ENCODE measurements at regions of chr5 and their contacts with region 1.

Region 1: GRCh38 chr5:131382407-131383395 is 118.8 kb downstream of the CDC42SE2 start:
- DNase-seq: peak; percentile 61
- H3K4me3 Mint-ChIP-seq: peak overlapping the region; percentile 57
- H3K27ac Mint-ChIP-seq: peak overlapping the region; percentile 96
- H3K4me1 Mint-ChIP-seq: peaks cover 93% of the 10 kb centered on the region
- H3K27me3 Mint-ChIP-seq: no peaks in the 10 kb centered on the region

Region 2: GRCh38 chr5:131209506-131210150 is 173.1 kb before region 1 on chr5:
- CTCF ChIA-PET with region 1: interaction called, 5 read pairs
- intact Hi-C with region 1: loop called (anchors 1 kb)
- DNase-seq: peak; percentile 77
- H3K4me3 Mint-ChIP-seq: peak overlapping the region; percentile 69
- H3K27ac Mint-ChIP-seq: peak overlapping the region; percentile 96
- H3K4me1 Mint-ChIP-seq: peaks cover 57% of the 10 kb centered on the region
- H3K27me3 Mint-ChIP-seq: no peaks in the 10 kb centered on the region

Region 3: DNA sequence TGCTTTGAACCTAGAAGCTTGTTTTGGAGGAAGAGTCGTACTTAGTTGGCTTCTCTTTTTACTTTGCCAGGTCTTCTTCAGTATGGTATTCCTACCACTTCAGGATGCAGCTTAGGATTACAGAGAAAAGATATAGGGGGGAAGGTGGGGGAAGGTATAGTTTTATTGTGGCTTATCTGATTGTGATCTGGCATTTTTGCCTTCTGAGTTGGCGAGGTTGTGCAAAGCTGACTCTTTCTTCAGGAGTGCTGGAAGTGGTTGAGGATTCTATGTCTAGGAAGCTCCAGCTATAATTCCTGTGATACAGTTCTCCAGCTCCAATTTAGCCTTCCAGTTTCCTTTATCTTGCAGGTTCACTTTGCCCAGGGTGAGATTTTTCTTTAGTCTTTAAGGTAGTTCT is 111.9 kb before region 1 on chr5:
- CTCF ChIA-PET with region 1: interaction called, 24 read pairs
- intact Hi-C with region 1: loop called (anchors 2 kb)
- DNase-seq: no peak
- H3K4me3 Mint-ChIP-seq: peak overlapping the region; percentile 50
- H3K27ac Mint-ChIP-seq: peak overlapping the region; percentile 97
- H3K4me1 Mint-ChIP-seq: peaks cover 75% of the 10 kb centered on the region
- H3K27me3 Mint-ChIP-seq: no peaks in the 10 kb centered on the region

Region 4: GRCh38 chr5:131328536-131329285 is 54.0 kb before region 1 on chr5:
- CTCF ChIA-PET with region 1: interaction called, 6 read pairs
- intact Hi-C with region 1: loop called (anchors 1 kb)
- DNase-seq: no peak
- H3K4me3 Mint-ChIP-seq: no peak overlapping the region
- H3K27ac Mint-ChIP-seq: peak overlapping the region; percentile 64
- H3K4me1 Mint-ChIP-seq: peaks cover 64% of the 10 kb centered on the region
- H3K27me3 Mint-ChIP-seq: no peaks in the 10 kb centered on the region

Region 5: GRCh38 chr5:131417240-131417869 is 34.7 kb after region 1 on chr5:
- CTCF ChIA-PET with region 1: interaction called, 6 read pairs
- intact Hi-C with region 1: loop called (anchors 1 kb)
- DNase-seq: peak; percentile 95
- H3K4me3 Mint-ChIP-seq: peak overlapping the region; percentile 34
- H3K27ac Mint-ChIP-seq: peak overlapping the region; percentile 81
- H3K4me1 Mint-ChIP-seq: peaks cover 41% of the 10 kb centered on the region
- H3K27me3 Mint-ChIP-seq: no peaks in the 10 kb centered on the region

Measured in activated naive CD4-positive, alpha-beta T cell treated with anti-CD3 and anti-CD28 coated beads for 36 hours (primary cell).